ENCODE measurements at regions of chr17 and their contacts with region 1.

Region 1: DNA sequence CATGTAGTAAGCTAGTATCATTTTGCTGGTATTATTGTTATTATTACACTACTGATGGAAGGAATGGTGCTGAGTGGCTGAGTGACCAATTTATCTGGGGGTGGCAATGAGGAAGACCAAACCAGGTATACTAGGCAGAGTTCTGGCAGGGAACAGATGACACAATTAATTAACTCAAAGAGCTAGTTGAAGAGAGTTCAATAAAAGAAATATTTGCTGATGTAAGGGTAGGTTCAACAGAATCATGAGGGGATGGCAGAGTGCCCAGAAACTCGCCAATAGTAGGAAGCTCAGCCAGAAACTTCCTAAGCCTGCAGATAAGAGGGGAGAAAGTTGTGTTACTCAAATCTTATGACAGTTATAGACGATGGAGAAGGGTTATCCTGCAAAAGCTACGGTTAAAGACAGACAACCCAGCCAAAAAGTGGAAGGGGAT is 352.5 kb downstream of the KCNJ2 start:
- DNase-seq: no peak

Region 2: DNA sequence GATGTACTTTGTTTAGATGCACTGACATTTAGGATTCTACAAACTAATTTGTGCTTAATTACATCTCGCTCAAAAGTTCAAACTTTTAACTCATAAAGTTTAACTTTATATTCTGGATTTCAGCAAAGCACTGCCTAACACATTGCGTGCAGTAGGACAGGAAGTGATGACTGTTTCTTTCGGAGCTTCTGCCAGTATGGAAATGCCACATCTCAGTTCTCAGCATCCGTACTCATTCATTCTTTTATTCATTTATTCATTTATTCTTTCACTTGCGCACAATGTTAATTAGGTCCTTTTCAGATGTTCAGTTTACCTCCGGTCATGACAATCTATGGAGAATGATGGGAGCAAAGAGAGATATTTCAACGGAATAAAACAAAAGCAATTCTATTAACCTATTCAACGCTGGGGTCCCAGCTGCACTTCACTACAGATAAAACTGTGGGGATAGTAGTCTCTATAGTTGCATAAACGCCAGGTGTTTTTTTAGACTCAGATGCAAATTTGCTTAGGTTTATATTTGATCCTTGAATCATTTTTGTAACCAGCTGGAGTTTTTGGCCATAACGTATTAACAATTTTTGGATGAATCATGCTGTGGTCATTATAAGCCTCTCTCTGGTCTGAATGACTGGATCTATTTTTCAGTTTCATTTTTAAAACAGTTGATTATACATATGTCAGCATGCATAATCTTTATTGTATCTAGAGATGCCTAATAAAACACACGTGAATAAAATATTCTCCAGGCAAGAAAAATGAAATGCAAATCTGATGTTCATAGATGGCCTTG is 208.6 kb before region 1 on chr17:
- intact Hi-C with region 1: loop called (anchors 5 kb)
- DNase-seq: no peak

Region 3: DNA sequence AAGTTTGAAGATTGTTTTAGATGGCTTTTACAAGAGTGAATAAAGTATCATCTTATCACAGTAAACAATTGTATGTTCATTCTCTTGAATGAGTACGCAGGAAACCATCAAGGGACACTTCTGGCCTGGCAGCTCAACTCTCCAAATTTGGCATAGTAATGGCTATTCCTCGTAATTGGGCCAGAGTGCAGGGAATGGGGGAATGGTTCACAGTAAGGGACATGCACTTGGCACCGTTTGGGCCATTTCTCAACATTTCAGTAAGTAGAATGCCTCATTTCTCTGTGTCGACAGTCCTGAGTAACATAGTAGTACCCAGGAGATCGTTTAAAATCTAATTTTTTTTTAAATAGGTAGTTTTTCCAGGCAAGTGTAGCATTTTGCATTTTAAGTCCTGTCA is 42.9 kb before region 1 on chr17:
- intact Hi-C with region 1: loop called (anchors 10 kb)
- DNase-seq: no peak

Measured in cardiac septum (tissue), 1 donor.